Mammary epithelial cell (primary cell): ENCODE measurements at regions of chr18 and their contacts with region 1.

Region 1: DNA sequence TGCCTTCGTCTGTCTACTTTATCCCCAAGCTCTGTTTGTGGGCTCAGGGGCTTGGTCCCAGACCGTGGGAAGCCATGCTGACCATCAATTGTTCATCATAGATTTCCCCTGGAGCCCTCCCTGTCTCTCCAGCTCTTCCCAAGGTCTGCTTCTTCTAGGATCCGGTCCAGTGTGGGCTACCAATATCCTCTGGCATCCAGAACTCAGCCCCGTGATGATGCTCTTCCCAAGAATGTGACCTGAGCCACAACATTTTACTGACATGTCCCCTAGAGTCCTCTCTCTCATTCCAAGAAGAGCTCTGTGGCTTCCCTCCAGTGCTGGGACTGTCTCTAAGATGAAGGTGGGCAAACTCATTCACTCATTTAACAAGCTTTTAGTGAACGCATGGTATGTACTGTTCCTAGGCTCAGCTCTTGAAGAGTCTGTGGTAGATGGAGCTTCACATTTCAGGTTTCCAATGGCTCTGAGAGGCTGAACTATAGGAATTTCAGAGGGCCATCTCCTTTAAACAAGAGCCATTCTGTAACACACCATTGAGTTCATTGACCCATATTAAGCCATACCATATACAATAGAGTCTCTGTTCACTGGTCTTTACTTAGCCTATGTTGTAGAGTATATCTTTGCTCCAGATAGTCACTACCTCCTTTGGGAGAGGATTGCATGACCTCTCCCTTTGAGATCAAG is 142.0 kb upstream of the APCDD1 start:
- DNase-seq: no peak
- H3K4me3 ChIP-seq: no peak overlapping the region
- H3K27ac ChIP-seq: no peak overlapping the region
- H3K4me1 ChIP-seq: no peaks in the 10 kb centered on the region
- H3K27me3 ChIP-seq: no peaks in the 10 kb centered on the region
- CTCF ChIP-seq: no peak

Region 2: GRCh38 chr18:10368456-10369453 is 56.3 kb after region 1 on chr18:
- CTCF ChIA-PET with region 1: no interaction called
- dilution Hi-C with region 1: loop called (anchors 5 kb)
- in situ Hi-C with region 1: no loop called
- intact Hi-C with region 1: no loop called
- DNase-seq: no peak
- H3K4me3 ChIP-seq: no peak overlapping the region
- H3K27ac ChIP-seq: no peak overlapping the region
- H3K4me1 ChIP-seq: no peaks in the 10 kb centered on the region
- H3K27me3 ChIP-seq: no peaks in the 10 kb centered on the region
- CTCF ChIP-seq: no peak

Region 3: DNA sequence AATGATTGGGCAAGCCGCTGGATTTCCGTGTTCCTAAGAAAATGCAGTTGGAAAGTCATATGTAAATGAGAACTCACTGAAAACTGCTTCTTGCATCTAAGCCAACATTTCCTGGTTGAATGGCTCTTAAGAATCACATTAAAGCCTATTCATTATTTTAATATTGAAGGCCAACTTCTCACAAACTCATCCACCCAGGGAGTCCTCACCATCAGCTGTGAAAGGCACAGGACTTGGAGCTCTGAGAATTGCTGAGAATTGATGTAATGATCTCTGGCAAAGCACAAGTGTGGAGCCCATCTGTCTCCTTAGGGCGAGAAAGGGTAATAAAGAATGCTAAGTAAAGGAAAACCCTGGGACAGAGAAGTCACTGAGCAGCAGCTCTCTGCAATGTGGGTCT is 86.1 kb after region 1 on chr18:
- CTCF ChIA-PET with region 1: no interaction called
- dilution Hi-C with region 1: loop called (anchors 5 kb)
- in situ Hi-C with region 1: no loop called
- intact Hi-C with region 1: no loop called
- DNase-seq: no peak
- H3K4me3 ChIP-seq: no peak overlapping the region
- H3K27ac ChIP-seq: no peak overlapping the region
- H3K4me1 ChIP-seq: no peaks in the 10 kb centered on the region
- H3K27me3 ChIP-seq: no peaks in the 10 kb centered on the region
- CTCF ChIP-seq: no peak

Region 4: GRCh38 chr18:11119962-11120361 is 807.5 kb after region 1 on chr18:
- CTCF ChIA-PET with region 1: no interaction called
- dilution Hi-C with region 1: no loop called
- in situ Hi-C with region 1: no loop called
- intact Hi-C with region 1: no loop called
- DNase-seq: no peak
- H3K4me3 ChIP-seq: no peak overlapping the region
- H3K27ac ChIP-seq: no peak overlapping the region
- H3K4me1 ChIP-seq: no peaks in the 10 kb centered on the region
- H3K27me3 ChIP-seq: no peaks in the 10 kb centered on the region
- CTCF ChIP-seq: no peak